ENCODE measurements at regions of chr6 and their contacts with region 1.

Region 1: GRCh38 chr6:36759148-36759759 is 61.6 kb downstream of the RAB44 start:
- DNase-seq: peak; percentile 45
- H3K4me3 ChIP-seq: no peak overlapping the region
- H3K27ac ChIP-seq: no peak overlapping the region
- H3K27me3 ChIP-seq: peaks cover 4% of the 10 kb centered on the region
- CTCF ChIP-seq: peak; percentile 99

Region 2: GRCh38 chr6:36615018-36615761 is 144.1 kb before region 1 on chr6:
- CTCF ChIA-PET with region 1: interaction called, 76 read pairs
- POLR2A ChIA-PET with region 1: interaction called, 5 read pairs
- DNase-seq: peak; percentile 39
- H3K4me3 ChIP-seq: no peak overlapping the region
- H3K27ac ChIP-seq: peak overlapping the region; percentile 11
- H3K27me3 ChIP-seq: no peaks in the 10 kb centered on the region
- CTCF ChIP-seq: peak; percentile 84

Region 3: DNA sequence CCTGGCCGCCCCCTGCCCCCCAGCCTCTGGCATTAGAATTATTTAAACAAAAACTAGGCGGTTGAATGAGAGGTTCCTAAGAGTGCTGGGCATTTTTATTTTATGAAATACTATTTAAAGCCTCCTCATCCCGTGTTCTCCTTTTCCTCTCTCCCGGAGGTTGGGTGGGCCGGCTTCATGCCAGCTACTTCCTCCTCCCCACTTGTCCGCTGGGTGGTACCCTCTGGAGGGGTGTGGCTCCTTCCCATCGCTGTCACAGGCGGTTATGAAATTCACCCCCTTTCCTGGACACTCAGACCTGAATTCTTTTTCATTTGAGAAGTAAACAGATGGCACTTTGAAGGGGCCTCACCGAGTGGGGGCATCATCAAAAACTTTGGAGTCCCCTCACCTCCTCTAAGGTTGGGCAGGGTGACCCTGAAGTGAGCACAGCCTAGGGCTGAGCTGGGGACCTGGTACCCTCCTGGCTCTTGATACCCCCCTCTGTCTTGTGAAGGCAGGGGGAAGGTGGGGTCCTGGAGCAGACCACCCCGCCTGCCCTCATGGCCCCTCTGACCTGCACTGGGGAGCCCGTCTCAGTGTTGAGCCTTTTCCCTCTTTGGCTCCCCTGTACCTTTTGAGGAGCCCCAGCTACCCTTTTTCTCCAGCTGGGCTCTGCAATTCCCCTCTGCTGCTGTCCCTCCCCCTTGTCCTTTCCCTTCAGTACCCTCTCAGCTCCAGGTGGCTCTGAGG is 73.2 kb before region 1 on chr6:
- CTCF ChIA-PET with region 1: interaction called, 21 read pairs
- POLR2A ChIA-PET with region 1: interaction called, 3 read pairs
- DNase-seq: no peak
- H3K4me3 ChIP-seq: no peak overlapping the region
- H3K27ac ChIP-seq: peak overlapping the region; percentile 70
- H3K27me3 ChIP-seq: no peaks in the 10 kb centered on the region
- CTCF ChIP-seq: no peak

Region 4: GRCh38 chr6:36772397-36772796 is 13.1 kb after region 1 on chr6:
- CTCF ChIA-PET with region 1: interaction called, 44 read pairs
- POLR2A ChIA-PET with region 1: interaction called, 4 read pairs
- DNase-seq: no peak
- H3K4me3 ChIP-seq: no peak overlapping the region
- H3K27ac ChIP-seq: no peak overlapping the region
- H3K27me3 ChIP-seq: peaks cover 14% of the 10 kb centered on the region
- CTCF ChIP-seq: no peak

Region 5: GRCh38 chr6:36874443-36875249 is 115.4 kb after region 1 on chr6 and contains the start of gene PPIL1:
- CTCF ChIA-PET with region 1: interaction called, 10 read pairs
- POLR2A ChIA-PET with region 1: no interaction called
- DNase-seq: peak; percentile 76
- H3K4me3 ChIP-seq: peak within 1 kb of the TSS; percentile 98
- H3K27ac ChIP-seq: peak within 1 kb of the TSS; percentile 98
- H3K27me3 ChIP-seq: no peaks in the 10 kb centered on the region
- CTCF ChIP-seq: 0 out of 2 replicates have a peak, but pooled peaks have one; percentile 11
- polyA plus RNA-seq, gene PPIL1: 34.4 and 40.7 TPM in 2 replicates

Region 6: DNA sequence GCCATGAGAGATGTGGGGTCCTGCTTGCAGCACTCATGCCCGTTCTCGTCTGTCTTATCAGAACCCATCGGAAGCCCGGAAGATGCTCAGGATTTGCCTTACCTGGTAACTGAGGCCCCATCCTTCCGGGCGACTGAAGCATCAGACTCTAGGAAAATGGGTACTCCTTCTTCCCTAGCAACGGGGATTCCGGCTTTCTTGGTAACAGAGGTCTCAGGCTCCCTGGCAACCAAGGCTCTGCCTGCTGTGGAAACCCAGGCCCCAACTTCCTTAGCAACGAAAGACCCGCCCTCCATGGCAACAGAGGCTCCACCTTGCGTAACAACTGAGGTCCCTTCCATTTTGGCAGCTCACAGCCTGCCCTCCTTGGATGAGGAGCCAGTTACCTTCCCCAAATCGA is 203.6 kb after region 1 on chr6:
- CTCF ChIA-PET with region 1: no interaction called
- POLR2A ChIA-PET with region 1: no interaction called
- DNase-seq: no peak
- H3K4me3 ChIP-seq: no peak overlapping the region
- H3K27ac ChIP-seq: no peak overlapping the region
- H3K27me3 ChIP-seq: no peaks in the 10 kb centered on the region
- CTCF ChIP-seq: no peak

Measured in AG04450 (cell line).